Activated B cell treated with CpG ODN at 0.5 μM for 24 hours (primary cell): ENCODE measurements at regions of chr5 and their contacts with region 1.

Region 1: GRCh38 chr5:21044123-21044522 is 1056.1 kb upstream of the CDH18 start:
- DNase-seq: no peak
- ATAC-seq: no peak
- H3K4me3 Mint-ChIP-seq: no peak overlapping the region
- H3K27ac Mint-ChIP-seq: no peak overlapping the region
- H3K4me1 Mint-ChIP-seq: peaks cover 3% of the 10 kb centered on the region
- H3K27me3 Mint-ChIP-seq: no peaks in the 10 kb centered on the region
- CTCF ChIP-seq: no peak

Region 2: DNA sequence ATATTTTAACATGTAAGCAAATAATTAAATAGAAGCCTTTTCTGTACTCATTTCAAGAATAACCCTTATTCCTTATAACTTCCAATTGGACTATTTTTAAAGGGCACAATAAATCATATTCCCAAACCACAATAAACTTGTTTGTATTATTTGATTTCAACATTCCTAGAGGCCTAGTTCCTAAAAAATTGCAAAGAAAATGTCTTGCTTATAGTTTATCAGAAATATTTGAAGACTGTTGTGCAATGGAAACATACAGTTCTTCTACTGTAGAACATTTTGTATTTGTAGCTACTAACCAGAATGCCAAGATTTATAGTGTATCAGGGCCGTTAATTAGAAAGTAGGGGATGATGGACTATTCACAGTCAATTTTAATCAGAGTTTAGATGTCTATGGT is 19.2 kb before region 1 on chr5:
- CTCF ChIA-PET with region 1: no interaction called
- POLR2A ChIA-PET with region 1: no interaction called
- intact Hi-C with region 1: loop called (anchors 1 kb)
- DNase-seq: no peak
- ATAC-seq: no peak
- H3K4me3 Mint-ChIP-seq: no peak overlapping the region
- H3K27ac Mint-ChIP-seq: no peak overlapping the region
- H3K4me1 Mint-ChIP-seq: no peaks in the 10 kb centered on the region
- H3K27me3 Mint-ChIP-seq: no peaks in the 10 kb centered on the region
- CTCF ChIP-seq: no peak

Region 3: DNA sequence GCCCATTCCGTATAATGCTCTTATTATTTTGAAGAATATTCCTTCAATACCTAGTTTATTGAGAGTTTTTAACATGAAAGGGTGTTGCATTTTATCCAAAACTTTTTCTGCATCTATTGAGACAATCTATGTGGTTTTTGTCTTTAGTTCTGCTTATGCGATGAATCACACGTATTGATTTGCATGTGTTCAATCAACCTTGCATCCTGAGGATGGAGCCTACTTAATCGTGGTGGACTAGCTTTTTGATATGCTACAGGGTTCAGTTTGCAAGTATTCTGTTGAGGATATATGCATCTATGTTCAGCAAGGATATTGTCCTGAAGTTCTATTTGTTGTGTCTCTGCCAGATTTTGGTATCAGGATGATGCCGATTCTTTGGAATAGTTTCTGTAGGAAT is 14.2 kb after region 1 on chr5:
- CTCF ChIA-PET with region 1: no interaction called
- POLR2A ChIA-PET with region 1: no interaction called
- intact Hi-C with region 1: loop called (anchors 2 kb)
- DNase-seq: no peak
- ATAC-seq: peak; percentile 96
- H3K4me3 Mint-ChIP-seq: peak overlapping the region; percentile 85
- H3K27ac Mint-ChIP-seq: peak overlapping the region; percentile 88
- H3K4me1 Mint-ChIP-seq: peaks cover 51% of the 10 kb centered on the region
- H3K27me3 Mint-ChIP-seq: no peaks in the 10 kb centered on the region
- CTCF ChIP-seq: no peak

Region 4: GRCh38 chr5:21145376-21145775 is 101.3 kb after region 1 on chr5:
- CTCF ChIA-PET with region 1: no interaction called
- POLR2A ChIA-PET with region 1: no interaction called
- intact Hi-C with region 1: no loop called
- DNase-seq: no peak
- ATAC-seq: no peak
- H3K4me3 Mint-ChIP-seq: no peak overlapping the region
- H3K27ac Mint-ChIP-seq: no peak overlapping the region
- H3K4me1 Mint-ChIP-seq: no peaks in the 10 kb centered on the region
- H3K27me3 Mint-ChIP-seq: no peaks in the 10 kb centered on the region
- CTCF ChIP-seq: no peak

Region 5: DNA sequence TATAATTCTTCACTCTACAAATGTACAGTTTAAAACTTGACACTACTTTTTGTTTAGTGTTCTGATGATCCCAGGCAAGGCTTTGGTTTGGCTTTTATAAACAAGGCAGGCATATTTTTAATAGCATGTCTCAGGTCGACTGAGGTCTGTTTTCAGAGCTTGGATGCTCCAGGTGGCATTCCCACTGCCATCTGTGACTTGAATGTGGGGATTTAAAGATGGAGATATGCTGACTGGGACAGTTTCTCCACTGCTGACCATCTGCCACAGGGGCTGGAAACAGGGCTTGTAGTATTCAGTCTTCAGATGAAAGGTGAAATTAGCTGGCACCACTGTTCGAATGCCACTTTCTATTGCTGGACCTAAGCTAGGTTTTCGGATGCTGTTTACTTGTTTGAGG is 210.0 kb after region 1 on chr5:
- CTCF ChIA-PET with region 1: no interaction called
- POLR2A ChIA-PET with region 1: no interaction called
- intact Hi-C with region 1: no loop called
- DNase-seq: no peak
- ATAC-seq: no peak
- H3K4me3 Mint-ChIP-seq: no peak overlapping the region
- H3K27ac Mint-ChIP-seq: no peak overlapping the region
- H3K4me1 Mint-ChIP-seq: no peaks in the 10 kb centered on the region
- H3K27me3 Mint-ChIP-seq: no peaks in the 10 kb centered on the region
- CTCF ChIP-seq: no peak